Dorsolateral prefrontal cortex (tissue), 120 donors: ENCODE measurements at regions of chr2 and their contacts with region 1.

Region 1: GRCh38 chr2:64988420-64989125 is 626 bp upstream of the SLC1A4 start:
- DNase-seq: peak; percentile 27 to 69 (median 55)
- H3K4me3 ChIP-seq: peak overlapping the region; percentile 69 to 97 (median 88)
- H3K27ac ChIP-seq: peak overlapping the region; percentile 21 to 98 (median 95)
- H3K27me3 ChIP-seq: no peaks in the 10 kb centered on the region
- CTCF ChIP-seq: peak in 50 of 56 donors; percentile 17 to 67 (median 43)

Region 2: GRCh38 chr2:64653349-64654062 is 335.1 kb before region 1 on chr2 and contains the start of gene SERTAD2:
- intact Hi-C with region 1: no loop called
- DNase-seq: peak; percentile 72 to 90 (median 83)
- H3K4me3 ChIP-seq: peak within 1 kb of the TSS; percentile 74 to 99 (median 93)
- H3K27ac ChIP-seq: peak within 1 kb of the TSS; percentile 83 to 99 (median 96)
- H3K27me3 ChIP-seq: no peaks in the 10 kb centered on the region
- CTCF ChIP-seq: peak in 25 of 56 donors; percentile 3 to 41 (median 16)
- total RNA-seq, gene SERTAD2: 7.8 to 24.8 (median 13.4) TPM

Region 3: GRCh38 chr2:64945973-64946768 is 42.4 kb before region 1 on chr2:
- intact Hi-C with region 1: loop called (anchors 2 to 5 kb)
- DNase-seq: peak in 1 of 10 donors; percentile 49
- H3K4me3 ChIP-seq: no peak overlapping the region
- H3K27ac ChIP-seq: no peak overlapping the region
- H3K27me3 ChIP-seq: no peaks in the 10 kb centered on the region
- CTCF ChIP-seq: no peak

Region 4: GRCh38 chr2:64975232-64975821 is 13.2 kb before region 1 on chr2:
- intact Hi-C with region 1: no loop called
- DNase-seq: peak in 8 of 10 donors; percentile 24 to 69 (median 47)
- H3K4me3 ChIP-seq: peak overlapping the region in 9 of 59 donors; percentile 5 to 40 (median 24)
- H3K27ac ChIP-seq: no peak overlapping the region
- H3K27me3 ChIP-seq: no peaks in the 10 kb centered on the region
- CTCF ChIP-seq: no peak

Region 5: DNA sequence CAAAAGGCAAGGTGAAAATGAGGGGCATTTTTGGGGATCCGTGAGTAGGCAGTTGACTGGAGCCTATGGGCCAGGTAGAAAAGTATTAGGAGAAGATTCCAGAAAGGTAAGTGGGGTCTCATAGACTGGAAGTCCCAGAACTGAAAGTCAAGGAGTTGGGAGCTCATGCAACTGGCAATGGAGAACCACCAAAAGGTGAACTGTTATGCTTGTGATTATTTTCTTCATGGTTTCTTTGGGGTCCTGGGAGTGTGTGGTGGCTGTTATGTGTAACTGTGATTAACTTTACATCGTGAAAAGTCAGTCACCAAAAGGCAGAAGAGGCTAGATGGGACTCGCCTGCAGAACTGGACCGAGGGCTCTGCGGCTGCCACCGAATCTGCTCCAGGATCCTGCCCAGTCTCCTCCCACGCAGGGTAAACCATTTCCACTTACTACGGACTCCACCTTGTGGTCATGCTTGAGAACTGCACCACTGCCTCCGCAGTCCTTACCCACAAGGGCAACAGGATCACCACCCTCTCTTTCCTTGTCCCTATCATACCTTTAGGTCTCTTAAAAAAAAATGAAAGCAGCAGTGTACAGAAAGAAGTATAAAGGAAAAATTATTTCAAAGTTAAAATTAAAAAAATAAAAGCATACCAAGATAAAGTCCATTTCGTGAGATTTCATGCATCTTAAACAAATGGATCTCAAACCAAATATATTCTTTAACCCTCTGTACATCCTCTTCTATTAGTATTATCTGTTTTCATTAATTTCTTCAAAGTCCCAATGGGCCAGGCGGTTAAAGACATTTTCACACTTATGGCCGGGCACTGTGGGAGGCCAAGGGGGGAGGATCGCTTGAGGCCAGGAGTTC is 52.1 kb after region 1 on chr2:
- intact Hi-C with region 1: loop called (anchors 5 kb)
- DNase-seq: peak; percentile 74 to 92 (median 88)
- H3K4me3 ChIP-seq: peak overlapping the region in 38 of 59 donors; percentile 5 to 47 (median 27)
- H3K27ac ChIP-seq: peak overlapping the region in 3 of 59 donors; percentile 6 to 31 (median 19)
- H3K27me3 ChIP-seq: no peaks in the 10 kb centered on the region
- CTCF ChIP-seq: peak; percentile 85 to 99 (median 98)

Region 6: DNA sequence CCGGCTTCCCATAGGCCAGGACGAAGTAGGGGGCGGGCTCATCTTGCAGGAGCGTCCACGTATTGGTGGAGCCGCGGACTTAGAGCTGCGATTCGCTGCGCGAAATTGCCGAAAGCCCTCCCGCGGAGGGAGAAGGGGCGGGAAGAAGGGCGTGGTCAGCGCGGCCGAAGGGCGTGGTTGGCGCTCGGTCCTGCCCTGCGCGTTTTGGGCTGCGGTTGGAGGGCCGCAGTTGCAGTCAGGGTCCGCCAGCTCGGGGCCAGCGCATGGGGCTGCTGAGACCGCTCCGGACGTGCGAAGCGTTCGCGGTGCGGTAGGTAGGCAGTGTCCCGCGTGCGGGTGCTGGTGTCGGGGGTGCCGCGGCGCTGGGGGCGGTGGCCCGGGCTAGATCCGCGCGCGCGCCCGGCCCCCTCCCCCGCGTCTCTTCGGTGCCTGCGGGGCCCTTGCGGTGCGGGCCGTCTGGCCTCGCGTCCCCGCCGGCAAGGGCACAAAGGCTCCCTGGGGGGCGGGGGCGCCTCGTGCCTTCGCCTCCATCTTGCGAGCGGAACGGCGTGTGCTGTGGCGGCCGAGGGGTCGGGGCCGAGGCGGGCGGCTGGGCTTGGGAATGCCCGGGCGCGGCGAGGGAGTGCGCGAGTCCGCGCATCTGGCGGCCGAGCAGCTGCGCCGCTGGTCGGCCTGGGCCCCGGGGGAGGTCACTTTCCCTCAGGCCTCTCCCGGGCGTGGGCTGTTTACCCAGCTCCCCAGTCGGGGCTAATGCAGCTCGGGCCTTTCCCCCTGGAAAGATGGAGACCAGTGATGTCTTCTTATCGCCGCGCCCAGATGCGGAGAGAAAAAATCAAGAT is 67.9 kb after region 1 on chr2 and contains the start of gene CEP68:
- intact Hi-C with region 1: loop called in 1 of 2 experiments (anchors 5 kb)
- DNase-seq: peak; percentile 91 to 98 (median 97)
- H3K4me3 ChIP-seq: peak within 1 kb of the TSS; percentile 53 to 98 (median 89)
- H3K27ac ChIP-seq: peak within 1 kb of the TSS; percentile 37 to 97 (median 88)
- H3K27me3 ChIP-seq: no peaks in the 10 kb centered on the region
- CTCF ChIP-seq: peak in 19 of 56 donors; percentile 1 to 52 (median 26)
- total RNA-seq, gene CEP68: 23.2 to 57.6 (median 40.4) TPM

Region 7: GRCh38 chr2:65300761-65301711 is 312.5 kb after region 1 on chr2:
- intact Hi-C with region 1: no loop called
- DNase-seq: peak; percentile 25 to 85 (median 71)
- H3K4me3 ChIP-seq: peak overlapping the region in 50 of 59 donors; percentile 2 to 55 (median 28)
- H3K27ac ChIP-seq: peak overlapping the region in 58 of 59 donors; percentile 51 to 94 (median 80)
- H3K27me3 ChIP-seq: no peaks in the 10 kb centered on the region
- CTCF ChIP-seq: peak in 3 of 56 donors; percentile 5 to 12 (median 6)